ENCODE measurements at regions of chr17 and their contacts with region 1.

Region 1: DNA sequence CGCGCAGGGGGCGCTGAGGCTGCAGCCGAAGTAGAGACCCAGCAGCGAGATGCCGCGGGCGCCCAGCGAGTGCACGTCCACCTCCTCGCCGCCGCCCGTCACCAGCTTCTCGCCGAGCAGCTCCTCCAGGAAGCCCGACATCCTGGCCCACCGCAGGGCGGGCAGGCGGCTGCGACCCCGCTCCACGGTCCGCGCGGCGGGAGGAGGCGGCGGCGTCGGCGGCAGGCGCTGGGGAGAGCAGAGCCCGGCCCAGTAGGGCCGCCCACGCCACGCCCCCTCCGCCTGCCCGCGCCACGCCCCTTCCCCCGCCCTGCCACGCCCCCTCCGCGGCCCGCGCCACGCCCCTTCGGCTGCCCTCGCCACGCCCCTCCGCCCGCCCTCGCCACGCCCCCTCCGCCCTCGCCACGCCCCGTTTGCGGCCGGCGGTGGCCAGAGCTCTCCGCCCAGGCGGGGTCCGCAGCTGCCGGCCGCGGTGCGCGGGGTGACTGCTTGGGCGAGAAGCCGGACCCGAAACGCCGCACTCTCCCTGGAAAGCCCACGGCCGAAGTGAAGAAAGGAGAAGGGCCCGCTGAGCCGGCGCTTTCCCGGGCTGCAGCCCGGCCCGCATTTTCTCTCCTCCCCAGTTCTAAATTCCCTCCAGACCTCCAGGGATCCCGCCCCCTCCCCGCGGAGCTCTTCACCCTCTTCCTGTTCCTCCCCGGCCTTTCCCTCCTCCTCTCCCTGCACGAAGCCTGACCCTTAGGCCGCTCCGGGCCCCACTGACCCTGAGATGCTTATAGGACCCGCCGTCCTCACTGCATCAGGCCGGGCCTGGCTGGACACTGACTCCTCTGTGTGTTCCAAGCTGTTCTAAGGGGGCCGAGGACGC is at the start of gene NXN:
- DNase-seq: peak; percentile 65 to 82
- ATAC-seq: peak; percentile 76 to 85
- H3K4me3 ChIP-seq: peak within 1 kb of the TSS; percentile 89
- H3K27ac ChIP-seq: peak within 1 kb of the TSS; percentile 76 to 91
- H3K4me1 ChIP-seq: peaks cover 16% of the 10 kb centered on the region; the same call in 2 of the 3 replicates
- CTCF ChIP-seq: peak; percentile 48
- EP300 ChIP-seq: no peak
- POLR2A ChIP-seq: peak; percentile 72
- RAD21 ChIP-seq: peak; percentile 19 to 56; a peak in 3 of 5 replicates
- polyA plus RNA-seq, gene NXN: 22.2 and 24.6 TPM in 2 replicates

Region 2: GRCh38 chr17:740240-741017 is 239.3 kb before region 1 on chr17:
- CTCF ChIA-PET with region 1: interaction called, 21 read pairs
- POLR2A ChIA-PET with region 1: no interaction called
- DNase-seq: no peak
- ATAC-seq: no peak
- H3K4me3 ChIP-seq: no peak overlapping the region
- H3K27ac ChIP-seq: no peak overlapping the region
- H3K4me1 ChIP-seq: no peaks in the 10 kb centered on the region
- CTCF ChIP-seq: no peak
- EP300 ChIP-seq: no peak
- POLR2A ChIP-seq: no peak
- RAD21 ChIP-seq: no peak

Region 3: GRCh38 chr17:794876-795275 is 184.9 kb before region 1 on chr17:
- CTCF ChIA-PET with region 1: interaction called, 428 read pairs
- POLR2A ChIA-PET with region 1: interaction called, 17 read pairs
- DNase-seq: peak; percentile 79 to 87
- ATAC-seq: peak; percentile 65 to 80
- H3K4me3 ChIP-seq: no peak overlapping the region
- H3K27ac ChIP-seq: peak overlapping the region in 1 of 2 experiments; percentile 17; a peak in 2 of 6 replicates
- H3K4me1 ChIP-seq: peaks cover 7% of the 10 kb centered on the region
- CTCF ChIP-seq: peak; percentile 92
- EP300 ChIP-seq: no peak
- POLR2A ChIP-seq: no peak
- RAD21 ChIP-seq: peak; percentile 97 to 98

Region 4: DNA sequence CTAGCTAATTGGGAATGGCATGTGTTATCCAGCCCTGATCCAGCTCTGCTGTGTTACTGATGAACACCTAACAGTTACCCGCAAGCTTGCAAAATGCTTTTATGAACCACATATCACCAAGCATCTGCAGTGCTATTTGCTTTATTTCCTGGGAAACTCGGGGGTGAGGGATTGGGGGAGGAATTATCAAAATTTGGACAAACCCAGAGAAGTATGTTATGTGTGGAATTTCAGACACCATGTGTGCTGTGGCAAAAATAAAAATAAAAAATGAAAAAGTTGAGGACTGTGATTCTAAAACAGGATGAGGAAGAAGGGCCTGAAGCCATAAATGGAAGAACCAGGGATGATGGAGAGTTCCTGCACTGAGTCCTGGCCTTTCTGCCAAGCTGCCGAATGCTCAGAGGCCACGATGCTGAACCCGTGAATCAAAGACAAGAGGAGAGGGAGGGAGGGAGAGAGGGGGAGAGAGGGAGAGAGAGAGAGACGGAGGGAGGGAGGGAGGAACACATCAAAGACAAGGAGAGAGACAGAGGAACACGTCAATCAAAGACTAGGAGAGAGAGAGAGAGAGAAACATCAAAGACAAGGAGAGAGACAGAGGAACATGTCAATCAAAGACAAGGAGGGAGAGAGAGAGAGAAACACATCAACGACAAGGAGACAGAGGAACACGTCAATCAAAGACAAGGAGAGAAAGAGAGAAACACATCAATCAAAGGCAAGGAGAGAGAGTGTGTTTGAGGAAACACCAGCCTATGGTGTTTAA is 107.8 kb before region 1 on chr17:
- CTCF ChIA-PET with region 1: interaction called, 18 read pairs
- POLR2A ChIA-PET with region 1: no interaction called
- DNase-seq: no peak
- ATAC-seq: no peak
- H3K4me3 ChIP-seq: no peak overlapping the region
- H3K27ac ChIP-seq: no peak overlapping the region
- H3K4me1 ChIP-seq: peaks cover 11% of the 10 kb centered on the region; the same call in 1 of the 3 replicates
- CTCF ChIP-seq: no peak
- EP300 ChIP-seq: no peak
- POLR2A ChIP-seq: no peak
- RAD21 ChIP-seq: no peak

Region 5: GRCh38 chr17:927611-928461 is 51.9 kb before region 1 on chr17:
- CTCF ChIA-PET with region 1: interaction called, 52 read pairs
- POLR2A ChIA-PET with region 1: no interaction called
- DNase-seq: peak; percentile 69 to 72
- ATAC-seq: peak; percentile 78 to 80
- H3K4me3 ChIP-seq: no peak overlapping the region
- H3K27ac ChIP-seq: peak overlapping the region; percentile 51 to 69
- H3K4me1 ChIP-seq: peaks cover 53% of the 10 kb centered on the region
- CTCF ChIP-seq: no peak
- EP300 ChIP-seq: peak in 1 of 2 experiments; percentile 81; a peak in 2 of 5 replicates
- POLR2A ChIP-seq: no peak
- RAD21 ChIP-seq: no peak; a peak in 1 of 5 replicates

Region 6: GRCh38 chr17:962670-963069 is 17.1 kb before region 1 on chr17:
- CTCF ChIA-PET with region 1: interaction called, 40 read pairs
- POLR2A ChIA-PET with region 1: no interaction called
- DNase-seq: no peak
- ATAC-seq: no peak
- H3K4me3 ChIP-seq: no peak overlapping the region
- H3K27ac ChIP-seq: no peak overlapping the region
- H3K4me1 ChIP-seq: peaks cover 13% of the 10 kb centered on the region
- CTCF ChIP-seq: no peak
- EP300 ChIP-seq: no peak
- POLR2A ChIP-seq: no peak
- RAD21 ChIP-seq: no peak

Region 7: DNA sequence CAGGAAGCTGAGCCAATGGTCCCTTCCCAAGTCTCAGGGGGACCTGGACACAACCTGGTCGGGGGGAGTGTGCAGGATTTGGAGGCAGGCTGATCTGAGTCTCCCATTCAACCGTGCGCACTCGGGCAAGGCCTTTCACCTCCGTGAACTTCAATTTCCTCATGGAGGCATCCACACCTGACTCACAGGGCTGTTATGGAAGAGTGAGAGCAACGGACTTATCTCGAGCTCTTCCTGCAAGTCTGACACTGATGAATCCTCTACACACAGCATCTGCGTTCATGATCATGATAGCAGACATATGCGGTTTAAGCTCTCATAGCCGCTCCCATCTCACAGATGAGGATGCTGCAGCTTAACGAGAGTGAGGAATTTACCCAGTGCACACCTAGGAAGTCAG is 38.8 kb after region 1 on chr17:
- CTCF ChIA-PET with region 1: no interaction called
- POLR2A ChIA-PET with region 1: no interaction called
- DNase-seq: no peak
- ATAC-seq: no peak
- H3K4me3 ChIP-seq: no peak overlapping the region
- H3K27ac ChIP-seq: no peak overlapping the region
- H3K4me1 ChIP-seq: no peaks in the 10 kb centered on the region
- CTCF ChIP-seq: no peak
- EP300 ChIP-seq: no peak
- POLR2A ChIP-seq: no peak
- RAD21 ChIP-seq: no peak

Region 8: DNA sequence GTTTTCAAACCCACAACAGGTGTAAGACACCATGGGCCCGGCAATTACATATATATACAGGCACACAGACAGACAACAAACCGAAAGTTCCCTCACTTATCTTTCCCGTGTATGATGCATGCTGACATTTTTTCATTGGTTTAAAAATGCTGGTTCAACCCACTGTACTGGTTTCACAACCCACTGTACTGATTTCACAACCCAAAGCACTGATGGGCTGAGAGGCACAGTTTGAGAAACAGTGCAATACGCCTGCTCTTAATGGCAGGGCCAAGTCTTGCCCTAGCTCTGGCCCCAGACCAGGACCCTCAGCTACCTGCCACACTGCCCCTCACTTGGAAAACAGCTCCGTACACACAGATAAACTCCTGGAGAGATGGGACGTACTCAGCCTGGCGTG is 118.6 kb after region 1 on chr17:
- CTCF ChIA-PET with region 1: no interaction called
- POLR2A ChIA-PET with region 1: no interaction called
- DNase-seq: no peak
- ATAC-seq: peak; percentile 37 to 63; a peak in 5 of 6 replicates
- H3K4me3 ChIP-seq: no peak overlapping the region
- H3K27ac ChIP-seq: no peak overlapping the region
- H3K4me1 ChIP-seq: no peaks in the 10 kb centered on the region
- CTCF ChIP-seq: no peak
- EP300 ChIP-seq: no peak
- POLR2A ChIP-seq: no peak
- RAD21 ChIP-seq: no peak

Measured in A549 (cell line).